ENCODE measurements at regions of chr5 and their contacts with region 1.

Region 1: GRCh38 chr5:151126199-151126645 is 31.4 kb downstream of the ANXA6 start:
- DNase-seq: peak; percentile 61
- ATAC-seq: no peak
- H3K4me3 Mint-ChIP-seq: peak overlapping the region; percentile 79
- H3K27ac Mint-ChIP-seq: peak overlapping the region; percentile 95
- H3K4me1 Mint-ChIP-seq: peaks cover 89% of the 10 kb centered on the region
- H3K27me3 Mint-ChIP-seq: no peaks in the 10 kb centered on the region
- CTCF ChIP-seq: no peak

Region 2: GRCh38 chr5:151023651-151024050 is 102.6 kb before region 1 on chr5:
- CTCF ChIA-PET with region 1: no interaction called
- POLR2A ChIA-PET with region 1: no interaction called
- intact Hi-C with region 1: no loop called
- DNase-seq: no peak
- ATAC-seq: no peak
- H3K4me3 Mint-ChIP-seq: no peak overlapping the region
- H3K27ac Mint-ChIP-seq: no peak overlapping the region
- H3K4me1 Mint-ChIP-seq: peaks cover 20% of the 10 kb centered on the region
- H3K27me3 Mint-ChIP-seq: no peaks in the 10 kb centered on the region
- CTCF ChIP-seq: no peak

Region 3: DNA sequence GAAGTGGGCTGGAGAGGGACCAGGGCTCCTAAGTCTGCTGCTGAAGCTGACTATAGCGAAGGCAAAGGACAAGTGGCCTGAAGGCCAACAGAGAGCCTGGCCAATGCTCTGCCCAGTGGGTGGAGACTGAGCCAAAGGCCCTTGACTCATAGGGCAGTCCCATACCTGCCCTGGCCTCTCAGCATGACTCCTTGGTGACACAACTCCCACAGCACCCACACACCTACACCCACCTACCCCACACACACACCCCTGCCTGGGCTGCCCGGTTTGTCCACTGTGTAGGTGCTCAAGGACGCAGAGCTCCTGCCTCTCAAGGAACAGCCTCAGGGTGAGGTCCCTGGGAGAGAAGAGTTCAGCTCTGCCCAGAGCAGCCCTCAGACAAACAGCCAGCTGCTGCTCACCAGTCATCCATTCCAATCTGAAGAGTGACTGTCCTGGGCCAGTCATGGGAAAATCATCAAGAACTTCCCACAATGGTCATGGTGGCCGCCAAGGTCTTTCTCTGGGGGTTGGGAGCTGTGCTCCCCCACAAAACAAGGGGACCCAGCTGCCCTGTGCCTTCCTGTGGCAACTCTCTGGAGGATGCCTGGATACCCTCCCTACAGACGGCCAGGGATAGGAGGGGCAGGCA is 50.4 kb before region 1 on chr5:
- CTCF ChIA-PET with region 1: interaction called, 3 read pairs
- POLR2A ChIA-PET with region 1: interaction called, 19 read pairs
- intact Hi-C with region 1: loop called (anchors 1 kb)
- DNase-seq: no peak
- ATAC-seq: no peak
- H3K4me3 Mint-ChIP-seq: peak overlapping the region; percentile 93
- H3K27ac Mint-ChIP-seq: peak overlapping the region; percentile 94
- H3K4me1 Mint-ChIP-seq: peaks cover 96% of the 10 kb centered on the region
- H3K27me3 Mint-ChIP-seq: no peaks in the 10 kb centered on the region
- CTCF ChIP-seq: no peak

Region 4: GRCh38 chr5:151141535-151141934 is 15.3 kb after region 1 on chr5:
- CTCF ChIA-PET with region 1: interaction called, 128 read pairs
- POLR2A ChIA-PET with region 1: interaction called, 37 read pairs
- intact Hi-C with region 1: loop called (anchors 1 kb)
- DNase-seq: peak; percentile 38
- ATAC-seq: peak; percentile 92
- H3K4me3 Mint-ChIP-seq: peak overlapping the region; percentile 85
- H3K27ac Mint-ChIP-seq: peak overlapping the region; percentile 93
- H3K4me1 Mint-ChIP-seq: peaks cover 85% of the 10 kb centered on the region
- H3K27me3 Mint-ChIP-seq: no peaks in the 10 kb centered on the region
- CTCF ChIP-seq: no peak

Region 5: DNA sequence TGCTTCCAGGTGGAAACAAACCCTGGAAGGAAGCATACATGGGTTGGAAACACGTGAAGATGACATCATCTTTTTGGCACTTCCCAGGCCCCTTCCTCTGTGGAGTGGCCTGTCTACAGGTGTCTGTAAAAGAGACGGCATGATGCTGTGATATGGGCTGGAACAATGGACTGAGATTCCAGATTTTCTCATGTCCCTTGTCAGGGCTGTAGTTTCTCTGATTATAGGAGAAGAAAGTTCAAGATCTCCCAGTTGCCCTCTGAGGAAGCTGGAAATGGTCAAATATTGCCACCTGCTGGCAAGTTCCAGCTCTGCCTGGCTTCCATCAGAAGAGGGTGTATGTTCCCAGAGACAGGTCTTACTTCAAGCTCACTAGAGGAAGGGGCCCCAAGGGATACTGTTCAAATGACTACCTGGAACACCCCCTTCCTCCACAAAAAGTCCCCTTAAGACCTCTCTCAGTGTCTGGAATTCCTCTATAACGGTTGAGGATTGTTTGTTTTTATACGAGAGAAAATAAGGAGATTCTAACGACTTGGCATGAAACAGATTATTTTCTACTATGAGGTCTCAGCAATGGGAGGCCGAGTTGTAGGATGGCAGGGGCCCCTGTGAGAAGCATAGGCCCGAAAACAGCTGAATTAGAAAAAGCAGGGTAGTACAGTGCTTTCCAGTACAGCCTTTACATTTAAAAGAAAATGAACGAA is 38.6 kb after region 1 on chr5:
- CTCF ChIA-PET with region 1: interaction called, 309 read pairs
- POLR2A ChIA-PET with region 1: interaction called, 47 read pairs
- intact Hi-C with region 1: loop called (anchors 1 kb)
- DNase-seq: peak; percentile 59
- ATAC-seq: peak; percentile 97
- H3K4me3 Mint-ChIP-seq: no peak overlapping the region
- H3K27ac Mint-ChIP-seq: peak overlapping the region; percentile 65
- H3K4me1 Mint-ChIP-seq: peaks cover 39% of the 10 kb centered on the region
- H3K27me3 Mint-ChIP-seq: no peaks in the 10 kb centered on the region
- CTCF ChIP-seq: peak; percentile 72

Region 6: DNA sequence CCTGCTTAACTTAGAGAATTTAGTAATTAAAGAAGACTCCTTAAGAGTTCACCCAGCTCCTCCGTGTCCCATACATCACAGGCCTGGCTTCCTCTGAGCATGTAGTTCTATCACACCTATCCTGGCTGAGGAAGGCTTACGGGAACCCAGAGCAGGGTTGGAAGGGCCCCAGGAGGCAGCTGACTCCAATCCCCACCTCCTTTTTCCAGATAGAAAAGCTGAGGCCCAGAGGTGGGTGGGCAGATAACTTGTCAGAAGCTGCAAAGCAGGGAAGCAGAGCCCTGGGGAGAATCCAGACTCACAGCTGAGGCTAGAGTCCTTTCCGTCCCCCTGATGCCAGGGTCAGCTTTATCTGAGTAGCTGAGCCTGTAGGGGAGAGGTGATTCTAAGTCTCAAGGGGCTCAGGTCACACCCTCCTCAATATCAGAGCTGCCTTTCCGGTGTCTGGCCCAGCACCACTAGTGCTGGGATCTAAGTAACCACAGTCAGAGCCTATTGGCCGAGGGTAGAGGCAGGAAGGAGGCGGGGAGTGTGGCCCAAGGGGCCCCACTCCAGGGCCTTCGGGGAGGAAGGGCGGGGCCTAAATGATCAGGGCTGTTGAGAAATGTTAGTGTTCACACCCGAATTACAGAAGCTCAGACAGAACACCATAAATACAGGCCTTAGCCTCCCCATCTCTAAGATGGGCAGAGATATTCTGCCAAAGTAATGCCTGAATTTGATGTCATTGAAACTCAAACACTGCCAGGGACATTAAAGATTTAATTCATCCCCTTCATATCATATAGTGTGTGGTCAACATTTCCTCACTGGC is 87.8 kb after region 1 on chr5:
- CTCF ChIA-PET with region 1: interaction called, 13 read pairs
- POLR2A ChIA-PET with region 1: interaction called, 28 read pairs
- intact Hi-C with region 1: loop called (anchors 1 kb)
- DNase-seq: peak; percentile 62
- ATAC-seq: peak; percentile 72
- H3K4me3 Mint-ChIP-seq: peak overlapping the region; percentile 66
- H3K27ac Mint-ChIP-seq: peak overlapping the region; percentile 94
- H3K4me1 Mint-ChIP-seq: peaks cover 96% of the 10 kb centered on the region
- H3K27me3 Mint-ChIP-seq: no peaks in the 10 kb centered on the region
- CTCF ChIP-seq: no peak

Region 7: DNA sequence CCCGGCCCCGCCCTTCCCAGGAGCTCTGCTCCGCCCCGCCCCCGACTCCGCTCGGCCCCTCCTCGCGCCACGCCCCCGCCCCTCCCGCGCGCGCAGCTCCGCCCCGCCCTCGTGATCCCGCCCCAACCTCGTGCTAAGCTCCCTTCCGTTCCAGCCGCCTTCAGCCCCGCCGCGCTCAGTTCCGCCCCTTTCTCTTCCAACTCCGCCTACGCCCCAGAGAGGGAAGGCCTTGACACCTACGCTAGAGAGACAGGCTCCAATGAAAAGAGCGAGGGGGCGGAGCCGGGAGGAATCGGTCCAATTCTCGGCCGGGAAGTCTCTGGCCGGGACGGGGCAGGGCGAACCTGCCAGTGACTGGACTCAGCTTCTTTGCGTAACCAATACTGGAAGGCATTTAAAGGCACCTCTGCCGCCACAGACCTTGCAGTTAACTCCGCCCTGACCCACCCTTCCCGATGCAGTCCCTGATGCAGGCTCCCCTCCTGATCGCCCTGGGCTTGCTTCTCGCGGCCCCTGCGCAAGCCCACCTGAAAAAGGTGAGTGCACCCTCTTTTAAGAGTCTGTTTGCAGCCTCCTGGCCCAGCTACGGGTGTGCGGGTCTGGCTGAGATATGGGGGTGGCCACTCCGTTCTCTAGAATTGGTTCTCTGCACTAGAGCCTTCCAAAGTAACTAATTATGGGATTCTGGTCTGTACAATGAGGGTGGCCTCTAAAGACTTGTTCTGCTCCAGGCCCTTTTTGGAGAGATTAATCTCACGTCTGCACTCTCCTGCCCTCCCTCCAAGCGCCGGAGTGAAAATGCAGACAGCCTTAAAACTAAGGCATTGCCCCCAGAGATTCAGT is 126.8 kb after region 1 on chr5 and contains the start of gene GM2A:
- CTCF ChIA-PET with region 1: interaction called, 10 read pairs
- POLR2A ChIA-PET with region 1: interaction called, 9 read pairs
- intact Hi-C with region 1: loop called (anchors 1 kb)
- DNase-seq: peak; percentile 92
- ATAC-seq: peak; percentile 83
- H3K4me3 Mint-ChIP-seq: peak within 1 kb of the TSS; percentile 96
- H3K27ac Mint-ChIP-seq: peak within 1 kb of the TSS; percentile 96
- H3K4me1 Mint-ChIP-seq: peaks cover 65% of the 10 kb centered on the region
- H3K27me3 Mint-ChIP-seq: no peaks in the 10 kb centered on the region
- CTCF ChIP-seq: no peak
- total RNA-seq, gene GM2A: 51.3 and 53.1 TPM in 2 replicates

Region 8: GRCh38 chr5:151499501-151500035 is 373.3 kb after region 1 on chr5:
- CTCF ChIA-PET with region 1: no interaction called
- POLR2A ChIA-PET with region 1: no interaction called
- intact Hi-C with region 1: loop called (anchors 1 kb)
- DNase-seq: no peak
- ATAC-seq: no peak
- H3K4me3 Mint-ChIP-seq: no peak overlapping the region
- H3K27ac Mint-ChIP-seq: no peak overlapping the region
- H3K4me1 Mint-ChIP-seq: peaks cover 5% of the 10 kb centered on the region
- H3K27me3 Mint-ChIP-seq: no peaks in the 10 kb centered on the region
- CTCF ChIP-seq: no peak

Measured in activated B cell treated with CpG ODN at 0.5 μM for 24 hours (primary cell).